WTC11 (cell line): ENCODE measurements at regions of chr5 and their contacts with region 1.

Region 1: DNA sequence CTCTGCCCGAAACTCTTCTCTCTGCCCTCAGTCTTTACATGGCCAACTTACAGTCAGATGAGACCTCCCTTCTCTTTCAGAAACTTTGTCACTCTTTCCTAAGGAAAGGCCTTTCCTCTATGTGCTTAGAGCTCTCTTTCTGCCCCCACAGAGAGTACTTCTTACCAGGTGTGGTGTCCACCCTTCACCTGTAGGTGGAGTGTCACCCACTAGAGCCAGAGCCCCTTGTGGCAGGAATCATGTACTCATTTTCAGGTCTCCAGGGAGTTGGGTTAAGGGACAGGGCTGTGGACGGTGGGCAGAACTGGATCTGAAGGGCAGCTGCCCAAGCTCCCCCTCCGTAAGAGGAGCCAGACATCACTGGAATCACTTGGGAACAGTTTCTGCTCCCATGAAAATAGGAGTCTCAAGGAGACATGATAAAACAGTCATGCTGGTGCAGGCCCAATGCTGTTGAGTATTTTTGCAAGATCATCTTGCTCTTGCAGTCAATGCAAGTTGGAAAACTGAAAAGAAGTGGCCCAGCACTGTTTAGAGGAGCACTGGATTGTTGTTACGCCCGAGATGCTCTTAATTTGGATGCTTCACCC is 436.7 kb downstream of the ZSWIM6 start:
- DNase-seq: peak; percentile 79
- ATAC-seq: peak; percentile 100
- H3K4me3 Mint-ChIP-seq: no peak overlapping the region
- H3K27ac Mint-ChIP-seq: 0 out of 2 replicates have a peak overlapping the region, but pooled peaks have one; percentile 33
- H3K4me1 Mint-ChIP-seq: peaks cover 6% of the 10 kb centered on the region
- H3K27me3 Mint-ChIP-seq: no peaks in the 10 kb centered on the region; the same call in 1 of the 2 replicates
- CTCF ChIP-seq: peak; percentile 79

Region 2: GRCh38 chr5:61658592-61659008 is 110.2 kb before region 1 on chr5:
- CTCF ChIA-PET with region 1: interaction called, 26 read pairs
- POLR2A ChIA-PET with region 1: no interaction called
- DNase-seq: peak; percentile 96
- ATAC-seq: peak; percentile 80
- H3K4me3 Mint-ChIP-seq: peak overlapping the region; percentile 59
- H3K27ac Mint-ChIP-seq: no peak overlapping the region
- H3K4me1 Mint-ChIP-seq: peaks cover 33% of the 10 kb centered on the region
- H3K27me3 Mint-ChIP-seq: peaks cover 16% of the 10 kb centered on the region
- CTCF ChIP-seq: peak; percentile 95

Region 3: DNA sequence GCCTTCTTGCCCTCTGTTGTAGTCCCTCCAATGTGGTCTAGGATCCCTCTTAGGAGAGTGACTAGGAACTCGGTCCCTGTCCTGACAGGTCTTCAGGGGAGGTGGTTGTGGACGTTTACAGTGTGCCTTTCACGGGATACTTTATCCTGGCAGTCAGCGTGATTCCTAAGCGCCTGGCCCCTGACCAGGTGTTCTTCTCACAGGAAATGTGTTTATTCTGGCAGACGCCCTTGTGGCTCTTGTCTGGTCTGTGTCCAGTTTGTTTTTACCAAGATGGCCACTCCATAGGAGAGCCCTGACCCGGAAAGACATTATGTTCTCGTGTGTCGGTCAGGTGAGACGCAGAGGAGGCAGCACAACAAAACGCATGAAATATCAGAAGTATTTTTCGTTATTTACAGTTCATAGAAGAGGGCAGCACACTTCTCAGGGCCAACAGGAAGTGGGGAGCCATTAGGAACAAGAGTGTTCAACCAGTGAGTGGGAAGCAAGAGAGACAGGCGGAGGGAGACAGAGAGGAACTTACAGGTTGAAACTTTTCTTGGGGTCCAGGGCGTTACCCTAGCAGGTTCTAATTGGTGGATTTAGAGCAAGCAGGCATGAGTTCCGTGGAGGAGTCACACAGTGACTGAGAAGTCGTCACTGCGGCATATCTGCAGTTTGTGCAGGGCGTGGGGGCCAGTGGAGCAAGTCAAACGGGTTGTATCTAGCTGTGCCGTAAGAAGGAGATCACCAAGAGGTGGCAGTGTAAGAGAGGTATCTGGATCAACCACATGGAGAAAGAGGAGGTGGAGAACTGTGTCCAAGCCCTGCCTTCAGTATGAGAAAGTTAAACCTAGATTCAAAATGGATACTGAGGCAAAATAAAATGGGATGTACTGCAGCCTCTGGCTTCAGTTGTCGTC is 23.8 kb before region 1 on chr5:
- CTCF ChIA-PET with region 1: interaction called, 15 read pairs
- POLR2A ChIA-PET with region 1: no interaction called
- DNase-seq: no peak
- ATAC-seq: peak; percentile 86
- H3K4me3 Mint-ChIP-seq: no peak overlapping the region
- H3K27ac Mint-ChIP-seq: no peak overlapping the region
- H3K4me1 Mint-ChIP-seq: peaks cover 20% of the 10 kb centered on the region
- H3K27me3 Mint-ChIP-seq: no peaks in the 10 kb centered on the region
- CTCF ChIP-seq: no peak

Region 4: DNA sequence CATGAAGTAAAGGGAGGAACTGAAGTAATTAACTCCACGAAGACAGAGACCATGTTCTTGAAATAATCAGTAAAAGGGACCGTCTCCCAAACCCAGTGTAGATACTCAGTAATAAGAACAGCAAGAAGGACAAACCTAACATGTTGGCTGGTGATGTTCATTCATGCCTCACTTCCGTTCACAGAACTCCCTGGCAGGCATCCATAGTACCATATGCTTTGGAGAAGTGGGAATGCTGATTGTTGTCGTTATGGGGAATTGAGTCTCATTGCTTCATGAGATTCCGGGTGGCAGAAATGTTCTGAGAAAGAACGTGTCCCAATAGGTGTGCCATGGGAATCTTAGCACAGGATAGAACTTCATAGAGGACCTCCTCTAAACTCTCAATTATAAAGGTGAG is 15.6 kb after region 1 on chr5:
- CTCF ChIA-PET with region 1: interaction called, 16 read pairs
- POLR2A ChIA-PET with region 1: no interaction called
- DNase-seq: no peak
- ATAC-seq: no peak
- H3K4me3 Mint-ChIP-seq: no peak overlapping the region
- H3K27ac Mint-ChIP-seq: no peak overlapping the region
- H3K4me1 Mint-ChIP-seq: peaks cover 11% of the 10 kb centered on the region
- H3K27me3 Mint-ChIP-seq: no peaks in the 10 kb centered on the region
- CTCF ChIP-seq: no peak

Region 5: GRCh38 chr5:61805101-61805500 is 36.3 kb after region 1 on chr5:
- CTCF ChIA-PET with region 1: interaction called, 23 read pairs
- POLR2A ChIA-PET with region 1: no interaction called
- DNase-seq: no peak
- ATAC-seq: no peak
- H3K4me3 Mint-ChIP-seq: no peak overlapping the region
- H3K27ac Mint-ChIP-seq: no peak overlapping the region
- H3K4me1 Mint-ChIP-seq: peaks cover 4% of the 10 kb centered on the region; the same call in 1 of the 2 replicates
- H3K27me3 Mint-ChIP-seq: no peaks in the 10 kb centered on the region; the same call in 1 of the 2 replicates
- CTCF ChIP-seq: no peak

Region 6: DNA sequence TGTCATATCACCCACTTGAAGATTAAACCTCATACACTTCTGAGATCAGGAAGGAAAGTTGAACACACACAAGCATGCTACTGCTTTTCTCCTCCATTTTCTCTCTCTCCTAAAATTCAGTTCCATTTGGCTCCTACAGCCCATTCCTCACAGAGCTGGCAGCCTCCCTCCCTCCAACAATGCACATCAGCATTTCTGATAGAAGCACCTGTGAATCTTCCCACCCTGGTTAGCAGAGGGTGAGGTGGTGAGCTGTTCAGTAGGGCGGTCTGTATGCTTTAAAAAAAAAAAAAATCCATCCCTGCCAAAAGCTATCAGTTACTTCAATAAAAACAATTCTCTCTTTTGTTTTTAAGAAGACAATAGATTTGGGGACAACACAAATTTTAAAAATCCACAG is 74.1 kb after region 1 on chr5:
- CTCF ChIA-PET with region 1: interaction called, 10 read pairs
- POLR2A ChIA-PET with region 1: no interaction called
- DNase-seq: no peak
- ATAC-seq: no peak
- H3K4me3 Mint-ChIP-seq: no peak overlapping the region
- H3K27ac Mint-ChIP-seq: no peak overlapping the region
- H3K4me1 Mint-ChIP-seq: peaks cover 6% of the 10 kb centered on the region; the same call in 1 of the 2 replicates
- H3K27me3 Mint-ChIP-seq: no peaks in the 10 kb centered on the region; the same call in 1 of the 2 replicates
- CTCF ChIP-seq: no peak